ENCODE measurements at regions of chr14 and their contacts with region 1.

Region 1: DNA sequence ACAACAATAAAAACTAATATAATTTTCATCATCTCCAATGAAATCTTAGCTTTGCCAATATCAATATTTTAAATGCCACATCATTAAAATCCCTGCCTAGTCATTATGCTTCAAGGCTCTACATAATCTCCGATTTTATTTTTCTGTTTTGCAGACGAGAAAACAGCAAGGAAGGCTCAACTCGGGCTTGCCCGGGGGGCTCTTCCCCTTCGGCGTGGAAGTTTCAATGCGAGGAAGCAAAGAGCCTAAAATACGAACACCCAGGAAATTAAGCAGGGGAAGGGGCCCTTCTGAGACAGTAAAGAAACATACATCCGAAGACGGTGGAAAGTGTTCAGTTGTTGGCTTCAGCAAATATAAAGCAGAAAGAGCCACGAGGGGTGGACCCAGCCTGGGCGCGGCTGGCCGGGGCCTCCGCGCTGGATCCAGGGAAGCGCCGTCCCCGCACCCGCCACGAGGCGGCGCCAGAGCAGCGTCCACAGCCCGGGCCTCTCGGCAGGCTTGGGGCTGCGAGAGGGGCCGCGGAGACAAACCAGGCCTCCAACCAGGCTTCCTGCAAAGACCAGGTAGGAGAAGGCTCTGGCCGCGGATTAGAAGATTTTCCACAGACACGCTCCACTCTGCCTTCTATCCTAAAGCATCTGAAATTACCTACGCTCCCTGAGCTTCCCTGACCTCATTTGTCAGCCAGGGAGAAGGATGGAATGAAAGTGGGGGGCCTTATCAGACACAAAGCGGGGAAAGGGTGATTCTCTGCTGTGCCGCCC is 77.2 kb downstream of the SERPINA3 start:
- DNase-seq: peak; percentile 87
- CTCF ChIP-seq: peak; percentile 94

Region 2: GRCh38 chr14:95196290-95196689 is 506.9 kb after region 1 on chr14:
- in situ Hi-C with region 1: loop called (anchors 25 kb)
- DNase-seq: peak; percentile 74
- CTCF ChIP-seq: peak; percentile 10

Region 3: GRCh38 chr14:95389471-95390011 is 700.1 kb after region 1 on chr14:
- in situ Hi-C with region 1: loop called (anchors 25 kb)
- DNase-seq: no peak
- CTCF ChIP-seq: no peak